ENCODE measurements at regions of chr9 and their contacts with region 1.

Region 1: DNA sequence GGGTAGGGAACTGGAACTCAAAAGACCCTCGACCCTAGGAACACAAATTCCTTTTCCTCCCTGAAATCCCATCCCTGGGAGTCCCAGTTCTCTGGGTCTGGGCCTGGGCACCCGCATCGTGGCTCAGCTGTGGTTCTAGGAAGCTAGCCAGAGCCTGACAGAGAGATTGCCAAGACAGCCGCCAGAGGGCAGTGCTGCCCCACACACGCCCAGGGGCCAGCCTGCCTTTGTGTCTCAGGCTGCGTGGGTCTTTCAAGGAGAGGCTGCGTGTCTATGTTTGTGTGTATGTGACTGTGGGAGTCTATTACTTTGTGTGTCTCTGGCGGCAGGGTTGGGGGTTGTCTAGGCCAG is 32.0 kb upstream of the TTLL11 start:
- DNase-seq: peak; percentile 70
- H3K4me3 ChIP-seq: no peak overlapping the region
- H3K27ac ChIP-seq: no peak overlapping the region
- H3K4me1 ChIP-seq: peaks cover 22% of the 10 kb centered on the region
- H3K27me3 ChIP-seq: no peaks in the 10 kb centered on the region
- CTCF ChIP-seq: peak; percentile 90 to 99

Region 2: DNA sequence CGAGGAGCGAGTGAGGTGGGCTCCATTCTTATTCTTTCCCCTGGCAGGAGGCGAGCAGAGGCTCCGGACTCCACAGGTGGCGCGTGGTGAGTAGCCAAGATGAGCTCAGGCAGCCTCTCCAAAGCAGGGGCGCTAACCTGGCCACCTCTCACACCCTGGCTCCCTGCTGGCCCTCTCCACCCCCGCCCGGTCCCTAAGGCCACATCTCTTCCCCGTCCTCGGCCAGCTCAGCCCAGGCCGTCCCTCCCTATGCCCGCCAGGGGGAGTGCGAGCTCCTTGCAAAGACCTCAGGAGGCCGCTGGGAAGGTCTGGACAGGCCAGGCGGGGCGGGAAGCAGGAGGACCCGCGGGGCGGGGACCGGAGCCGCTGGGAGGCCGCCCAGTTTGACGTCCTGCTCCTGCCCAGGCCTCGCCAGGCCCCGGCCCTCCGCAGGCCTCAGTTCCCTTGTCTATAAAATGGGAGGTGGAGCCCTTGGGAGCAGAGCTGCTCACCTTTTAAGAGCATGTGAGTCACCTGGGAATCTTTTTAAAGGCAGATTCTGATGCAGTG is 579.2 kb before region 1 on chr9:
- CTCF ChIA-PET with region 1: no interaction called
- dilution Hi-C with region 1: no loop called
- in situ Hi-C with region 1: no loop called
- intact Hi-C with region 1: loop called (anchors 1 kb)
- DNase-seq: peak; percentile 93
- H3K4me3 ChIP-seq: no peak overlapping the region
- H3K27ac ChIP-seq: no peak overlapping the region
- H3K4me1 ChIP-seq: peaks cover 13% of the 10 kb centered on the region
- H3K27me3 ChIP-seq: no peaks in the 10 kb centered on the region
- CTCF ChIP-seq: peak; percentile 87 to 98

Region 3: GRCh38 chr9:122144836-122145591 is 19.9 kb after region 1 on chr9:
- CTCF ChIA-PET with region 1: interaction called, 3 read pairs
- dilution Hi-C with region 1: no loop called
- in situ Hi-C with region 1: no loop called
- intact Hi-C with region 1: loop called (anchors 1 kb)
- DNase-seq: no peak
- H3K4me3 ChIP-seq: no peak overlapping the region
- H3K27ac ChIP-seq: no peak overlapping the region
- H3K4me1 ChIP-seq: no peaks in the 10 kb centered on the region
- H3K27me3 ChIP-seq: no peaks in the 10 kb centered on the region
- CTCF ChIP-seq: peak; percentile 15 to 46

Region 4: DNA sequence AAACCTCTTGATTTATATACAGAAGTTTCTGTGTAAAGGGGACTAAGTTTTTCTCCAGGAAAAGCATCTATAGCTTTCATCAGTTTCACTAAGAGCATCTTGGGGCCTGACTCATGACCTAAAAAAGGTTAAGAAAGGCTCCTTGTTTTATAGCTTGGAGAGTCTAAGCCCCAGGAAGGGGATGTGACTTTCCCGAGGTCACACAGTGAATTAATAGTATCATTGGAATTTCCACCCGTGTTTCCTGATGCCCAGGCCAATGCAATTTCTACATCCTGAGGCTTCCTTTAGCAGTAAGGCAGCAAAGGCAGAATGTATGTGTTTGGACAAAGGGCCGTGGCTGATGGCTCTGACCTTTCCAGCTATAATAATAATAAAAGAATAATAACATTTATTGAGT is 43.2 kb after region 1 on chr9:
- CTCF ChIA-PET with region 1: no interaction called
- dilution Hi-C with region 1: no loop called
- in situ Hi-C with region 1: no loop called
- intact Hi-C with region 1: no loop called
- DNase-seq: peak; percentile 34
- H3K4me3 ChIP-seq: no peak overlapping the region
- H3K27ac ChIP-seq: no peak overlapping the region
- H3K4me1 ChIP-seq: no peaks in the 10 kb centered on the region
- H3K27me3 ChIP-seq: no peaks in the 10 kb centered on the region
- CTCF ChIP-seq: no peak

Region 5: DNA sequence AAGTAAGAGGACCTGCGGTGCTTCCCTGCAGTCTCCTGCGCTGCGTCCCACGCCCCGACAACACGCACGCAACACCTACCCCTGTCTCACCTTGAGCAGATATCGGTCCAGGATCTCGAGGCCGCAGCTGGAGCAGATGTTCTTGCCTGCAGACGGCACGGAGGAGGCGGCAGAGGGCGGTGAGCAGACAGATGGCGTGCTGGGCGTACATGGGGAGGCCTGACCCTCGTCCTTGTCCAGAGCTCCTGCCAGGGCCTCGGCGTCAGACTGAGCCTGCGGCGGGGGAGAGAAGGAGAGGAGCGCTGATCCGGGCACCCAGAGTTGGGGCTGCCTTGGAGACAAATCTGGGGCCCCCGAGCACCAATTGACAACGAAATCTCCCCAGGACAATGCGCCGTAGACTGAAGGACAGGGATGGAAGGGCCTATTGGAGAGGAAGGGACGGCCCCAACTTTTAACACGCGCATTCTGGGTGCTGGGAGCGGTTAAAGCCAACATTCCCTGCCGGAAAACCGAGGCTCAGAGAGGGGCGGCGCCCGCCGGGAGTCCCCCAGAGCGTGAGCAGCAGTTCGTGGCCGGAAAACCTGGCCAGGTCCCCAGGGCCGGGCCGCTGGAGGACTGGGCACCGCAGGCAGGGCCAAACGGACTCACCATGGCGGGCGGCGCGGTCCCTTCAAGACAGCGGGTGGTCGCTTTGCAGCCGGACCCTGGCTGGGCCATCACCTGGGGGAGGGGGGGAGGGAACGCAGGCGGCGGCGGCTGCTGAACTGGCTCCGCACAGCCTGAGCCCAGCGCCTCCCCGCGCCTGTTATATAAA is 101.8 kb after region 1 on chr9:
- CTCF ChIA-PET with region 1: no interaction called
- dilution Hi-C with region 1: no loop called
- in situ Hi-C with region 1: no loop called
- intact Hi-C with region 1: loop called (anchors 1 kb)
- DNase-seq: no peak
- H3K4me3 ChIP-seq: peak overlapping the region in 1 of 3 experiments; percentile 11
- H3K27ac ChIP-seq: no peak overlapping the region
- H3K4me1 ChIP-seq: peaks cover 20% of the 10 kb centered on the region
- H3K27me3 ChIP-seq: peaks cover 18% of the 10 kb centered on the region
- CTCF ChIP-seq: no peak

Region 6: GRCh38 chr9:122340161-122340560 is 215.0 kb after region 1 on chr9:
- CTCF ChIA-PET with region 1: interaction called, 3 read pairs
- dilution Hi-C with region 1: loop called (anchors 5 kb)
- in situ Hi-C with region 1: no loop called
- intact Hi-C with region 1: no loop called
- DNase-seq: no peak
- H3K4me3 ChIP-seq: no peak overlapping the region
- H3K27ac ChIP-seq: no peak overlapping the region
- H3K4me1 ChIP-seq: no peaks in the 10 kb centered on the region
- H3K27me3 ChIP-seq: no peaks in the 10 kb centered on the region
- CTCF ChIP-seq: no peak

Region 7: GRCh38 chr9:122453677-122454135 is 328.6 kb after region 1 on chr9:
- CTCF ChIA-PET with region 1: no interaction called
- dilution Hi-C with region 1: no loop called
- in situ Hi-C with region 1: loop called (anchors 10 kb)
- intact Hi-C with region 1: loop called (anchors 1 kb)
- DNase-seq: peak; percentile 3
- H3K4me3 ChIP-seq: no peak overlapping the region
- H3K27ac ChIP-seq: no peak overlapping the region
- H3K4me1 ChIP-seq: peaks cover 4% of the 10 kb centered on the region
- H3K27me3 ChIP-seq: no peaks in the 10 kb centered on the region
- CTCF ChIP-seq: no peak

Measured in mammary epithelial cell (primary cell).